ENCODE measurements at regions of chr18 and their contacts with region 1.

Region 1: GRCh38 chr18:70058916-70059315 is 111.2 kb upstream of the CD226 start:
- DNase-seq: no peak
- ATAC-seq: no peak
- H3K4me3 ChIP-seq: no peak overlapping the region
- H3K27ac ChIP-seq: no peak overlapping the region
- H3K4me1 ChIP-seq: peaks cover 0 to 3% (median 0%) of the 10 kb centered on the region in 12 donors
- H3K27me3 ChIP-seq: no peaks in the 10 kb centered on the region
- CTCF ChIP-seq: no peak
- POLR2A ChIP-seq: no peak

Region 2: GRCh38 chr18:69845593-69846506 is 213.1 kb before region 1 on chr18:
- intact Hi-C with region 1: loop called in 2 of 10 experiments (anchors 10 kb)
- DNase-seq: no peak
- ATAC-seq: peak in 2 of 4 donors; percentile 30 to 34
- H3K4me3 ChIP-seq: no peak overlapping the region
- H3K27ac ChIP-seq: no peak overlapping the region
- H3K4me1 ChIP-seq: peaks cover 0 to 16% (median 4%) of the 10 kb centered on the region in 12 donors
- H3K27me3 ChIP-seq: no peaks in the 10 kb centered on the region
- CTCF ChIP-seq: peak in 2 of 12 donors; percentile 5 to 8
- POLR2A ChIP-seq: no peak